ENCODE measurements at regions of chr15 and their contacts with region 1.

Region 1: GRCh38 chr15:82046666-82047452 is 1.0 kb upstream of the MEX3B start:
- DNase-seq: peak; percentile 94
- H3K4me3 ChIP-seq: peak overlapping the region; percentile 84 to 97 (median 95)
- H3K27ac ChIP-seq: peak overlapping the region; percentile 96
- H3K4me1 ChIP-seq: peaks cover 21% of the 10 kb centered on the region
- H3K27me3 ChIP-seq: peaks cover 1 to 2% of the 10 kb centered on the region in 2 experiments
- CTCF ChIP-seq: peak; percentile 73 to 85
- POLR2A ChIP-seq: peak; percentile 79

Region 2: GRCh38 chr15:81106560-81106959 is 940.3 kb before region 1 on chr15:
- CTCF ChIA-PET with region 1: no interaction called
- POLR2A ChIA-PET with region 1: no interaction called
- dilution Hi-C with region 1: no loop called
- intact Hi-C with region 1: loop called (anchors 10 kb)
- DNase-seq: peak; percentile 78
- H3K4me3 ChIP-seq: no peak overlapping the region
- H3K27ac ChIP-seq: no peak overlapping the region
- H3K4me1 ChIP-seq: peaks cover 7% of the 10 kb centered on the region
- H3K27me3 ChIP-seq: peaks cover 0 to 2% of the 10 kb centered on the region in 2 experiments
- CTCF ChIP-seq: peak; percentile 66 to 73
- POLR2A ChIP-seq: no peak

Region 3: GRCh38 chr15:81410318-81410753 is 636.5 kb before region 1 on chr15:
- CTCF ChIA-PET with region 1: interaction called, 3 read pairs
- POLR2A ChIA-PET with region 1: no interaction called
- dilution Hi-C with region 1: no loop called
- intact Hi-C with region 1: loop called (anchors 1 kb)
- DNase-seq: peak; percentile 74
- H3K4me3 ChIP-seq: no peak overlapping the region
- H3K27ac ChIP-seq: no peak overlapping the region
- H3K4me1 ChIP-seq: no peaks in the 10 kb centered on the region
- H3K27me3 ChIP-seq: peaks cover 0 to 2% of the 10 kb centered on the region in 2 experiments
- CTCF ChIP-seq: peak; percentile 28 to 32
- POLR2A ChIP-seq: no peak

Region 4: DNA sequence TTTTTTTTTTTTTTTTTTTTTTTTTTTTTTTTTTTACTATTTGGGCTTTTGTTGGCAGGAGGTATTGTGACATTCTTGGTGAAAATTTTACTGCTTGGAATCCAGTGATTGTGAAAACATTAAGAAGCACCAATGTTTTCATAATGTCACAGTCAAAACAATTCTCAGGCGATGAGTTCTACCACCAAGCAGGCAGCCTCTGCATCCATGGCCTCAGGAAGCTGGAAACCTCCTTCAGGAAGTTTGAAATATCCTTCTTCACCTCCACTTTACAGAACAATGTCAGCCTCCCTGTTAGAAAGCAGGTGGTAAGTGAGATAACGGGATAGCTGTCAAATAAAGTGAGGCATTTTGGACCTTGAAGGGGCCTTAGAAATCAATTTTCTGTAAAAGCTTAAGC is 99.3 kb before region 1 on chr15:
- CTCF ChIA-PET with region 1: no interaction called
- POLR2A ChIA-PET with region 1: no interaction called
- dilution Hi-C with region 1: no loop called
- intact Hi-C with region 1: loop called (anchors 1 kb)
- DNase-seq: peak; percentile 42
- H3K4me3 ChIP-seq: no peak overlapping the region
- H3K27ac ChIP-seq: no peak overlapping the region
- H3K4me1 ChIP-seq: no peaks in the 10 kb centered on the region
- H3K27me3 ChIP-seq: no peaks in the 10 kb centered on the region
- CTCF ChIP-seq: no peak
- POLR2A ChIP-seq: no peak

Region 5: DNA sequence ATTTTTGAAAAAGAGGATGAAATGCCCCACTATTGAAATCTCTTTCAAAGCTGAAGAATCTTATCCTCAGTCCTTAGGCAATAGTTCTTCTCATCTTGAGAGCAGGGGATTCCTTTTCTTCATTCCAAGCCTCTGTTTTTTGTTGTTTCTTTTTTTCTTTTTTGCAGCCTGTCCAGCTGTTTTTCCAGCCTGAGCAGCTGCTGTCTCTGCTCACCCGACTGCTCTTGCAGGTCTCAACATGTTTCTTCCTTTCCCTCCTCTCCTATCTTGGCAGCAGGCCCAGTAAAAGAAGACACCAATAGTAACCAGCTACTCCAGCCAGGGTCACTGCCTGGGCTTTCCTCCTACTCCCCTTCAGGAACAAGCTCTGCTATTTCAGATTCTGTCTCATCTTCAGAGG is 24.9 kb before region 1 on chr15:
- CTCF ChIA-PET with region 1: no interaction called
- POLR2A ChIA-PET with region 1: no interaction called
- dilution Hi-C with region 1: no loop called
- intact Hi-C with region 1: no loop called
- DNase-seq: no peak
- H3K4me3 ChIP-seq: no peak overlapping the region
- H3K27ac ChIP-seq: no peak overlapping the region
- H3K4me1 ChIP-seq: no peaks in the 10 kb centered on the region
- H3K27me3 ChIP-seq: no peaks in the 10 kb centered on the region
- CTCF ChIP-seq: no peak
- POLR2A ChIP-seq: no peak

Region 6: GRCh38 chr15:82129761-82130160 is 82.9 kb after region 1 on chr15:
- CTCF ChIA-PET with region 1: no interaction called
- POLR2A ChIA-PET with region 1: no interaction called
- dilution Hi-C with region 1: no loop called
- intact Hi-C with region 1: no loop called
- DNase-seq: no peak
- H3K4me3 ChIP-seq: no peak overlapping the region
- H3K27ac ChIP-seq: no peak overlapping the region
- H3K4me1 ChIP-seq: no peaks in the 10 kb centered on the region
- H3K27me3 ChIP-seq: no peaks in the 10 kb centered on the region
- CTCF ChIP-seq: no peak
- POLR2A ChIP-seq: no peak

Region 7: GRCh38 chr15:82146990-82147461 is 100.2 kb after region 1 on chr15:
- CTCF ChIA-PET with region 1: no interaction called
- POLR2A ChIA-PET with region 1: no interaction called
- dilution Hi-C with region 1: no loop called
- intact Hi-C with region 1: loop called (anchors 2 kb)
- DNase-seq: peak; percentile 93
- H3K4me3 ChIP-seq: no peak overlapping the region
- H3K27ac ChIP-seq: peak overlapping the region; percentile 83
- H3K4me1 ChIP-seq: peaks cover 15% of the 10 kb centered on the region
- H3K27me3 ChIP-seq: no peaks in the 10 kb centered on the region
- CTCF ChIP-seq: no peak
- POLR2A ChIP-seq: no peak

Region 8: GRCh38 chr15:83207622-83208411 is 1161.0 kb after region 1 on chr15 and contains the start of gene HDGFL3:
- CTCF ChIA-PET with region 1: no interaction called
- POLR2A ChIA-PET with region 1: no interaction called
- dilution Hi-C with region 1: no loop called
- intact Hi-C with region 1: loop called (anchors 2 kb)
- DNase-seq: peak; percentile 59
- H3K4me3 ChIP-seq: peak within 1 kb of the TSS; percentile 91 to 95 (median 93)
- H3K27ac ChIP-seq: peak within 1 kb of the TSS; percentile 95
- H3K4me1 ChIP-seq: peaks cover 29% of the 10 kb centered on the region
- H3K27me3 ChIP-seq: no peaks in the 10 kb centered on the region
- CTCF ChIP-seq: peak in 1 of 2 donors; percentile 26
- POLR2A ChIP-seq: peak; percentile 47
- total RNA-seq, gene HDGFL3: 155 and 156 TPM in 2 replicates

Measured in endothelial cell of umbilical vein (primary cell).